ENCODE measurements at regions of chr22 and their contacts with region 1.

Region 1: DNA sequence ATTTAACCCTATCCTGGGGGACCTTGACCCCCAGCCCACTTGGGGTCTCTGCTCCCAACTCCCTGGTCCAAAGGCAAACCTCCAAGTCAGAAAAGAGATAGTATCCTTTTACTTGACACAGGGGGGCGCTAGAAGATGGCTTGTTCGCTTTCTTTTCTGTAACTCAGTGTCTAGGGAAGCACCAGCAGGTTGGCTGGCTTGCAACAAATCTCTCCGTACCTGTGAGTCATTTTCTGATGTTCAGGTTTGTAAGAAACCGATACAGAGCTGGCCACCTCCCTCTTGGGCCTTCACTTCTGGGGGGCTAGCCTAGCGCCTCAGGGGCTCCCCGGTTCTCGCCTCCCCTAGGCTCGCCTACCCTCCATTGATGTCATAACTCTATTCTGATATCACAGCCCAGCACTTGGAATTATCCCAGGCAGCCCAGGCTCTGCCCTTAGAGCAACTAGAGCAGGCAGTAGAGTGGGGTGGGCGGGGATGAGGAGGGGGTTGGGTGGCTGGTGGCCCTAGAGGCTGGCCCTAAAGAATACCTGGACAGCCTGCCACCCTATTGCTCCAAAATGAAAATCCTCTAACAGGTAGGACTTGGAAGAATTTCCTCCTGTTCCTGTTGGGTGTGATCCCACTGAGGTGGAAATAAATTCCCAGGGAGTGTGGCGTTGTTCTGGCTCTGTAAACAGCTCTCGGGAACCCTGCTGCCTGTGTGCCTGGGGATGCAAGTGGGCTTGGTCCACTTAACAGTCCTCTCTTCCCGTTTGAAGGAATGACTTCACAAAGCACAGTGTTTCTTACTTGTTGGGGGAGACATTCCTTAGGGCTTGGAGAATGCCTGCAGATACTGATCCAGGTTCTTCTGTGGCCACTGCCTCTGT is 69.4 kb downstream of the OSBP2 start:
- DNase-seq: peak; percentile 85
- ATAC-seq: peak; percentile 93
- H3K4me3 ChIP-seq: no peak overlapping the region
- H3K27ac ChIP-seq: peak overlapping the region; percentile 63
- H3K4me1 ChIP-seq: peaks cover 8% of the 10 kb centered on the region
- H3K27me3 ChIP-seq: no peaks in the 10 kb centered on the region
- CTCF ChIP-seq: peak; percentile 76

Region 2: GRCh38 chr22:30705710-30706651 is 58.1 kb before region 1 on chr22:
- CTCF ChIA-PET with region 1: no interaction called
- POLR2A ChIA-PET with region 1: no interaction called
- intact Hi-C with region 1: no loop called
- DNase-seq: peak; percentile 83
- ATAC-seq: peak; percentile 93
- H3K4me3 ChIP-seq: no peak overlapping the region
- H3K27ac ChIP-seq: peak overlapping the region; percentile 77
- H3K4me1 ChIP-seq: peaks cover 25% of the 10 kb centered on the region
- H3K27me3 ChIP-seq: no peaks in the 10 kb centered on the region
- CTCF ChIP-seq: no peak

Region 3: GRCh38 chr22:30802202-30803166 is 38.4 kb after region 1 on chr22:
- CTCF ChIA-PET with region 1: interaction called, 6 read pairs
- POLR2A ChIA-PET with region 1: no interaction called
- intact Hi-C with region 1: loop called (anchors 5 kb)
- DNase-seq: peak; percentile 91
- ATAC-seq: peak; percentile 80
- H3K4me3 ChIP-seq: peak overlapping the region; percentile 65
- H3K27ac ChIP-seq: peak overlapping the region; percentile 96
- H3K4me1 ChIP-seq: peaks cover 47% of the 10 kb centered on the region
- H3K27me3 ChIP-seq: no peaks in the 10 kb centered on the region
- CTCF ChIP-seq: no peak

Region 4: GRCh38 chr22:30920407-30920806 is 156.4 kb after region 1 on chr22:
- CTCF ChIA-PET with region 1: interaction called, 11 read pairs
- POLR2A ChIA-PET with region 1: no interaction called
- intact Hi-C with region 1: loop called (anchors 1 kb)
- DNase-seq: peak; percentile 70
- ATAC-seq: peak; percentile 70
- H3K4me3 ChIP-seq: no peak overlapping the region
- H3K27ac ChIP-seq: no peak overlapping the region
- H3K4me1 ChIP-seq: no peaks in the 10 kb centered on the region
- H3K27me3 ChIP-seq: no peaks in the 10 kb centered on the region
- CTCF ChIP-seq: peak; percentile 82

Region 5: GRCh38 chr22:31036671-31037550 is 272.9 kb after region 1 on chr22:
- CTCF ChIA-PET with region 1: no interaction called
- POLR2A ChIA-PET with region 1: no interaction called
- intact Hi-C with region 1: no loop called
- DNase-seq: peak; percentile 64
- ATAC-seq: peak; percentile 89
- H3K4me3 ChIP-seq: peak overlapping the region; percentile 62
- H3K27ac ChIP-seq: no peak overlapping the region
- H3K4me1 ChIP-seq: peaks cover 6% of the 10 kb centered on the region
- H3K27me3 ChIP-seq: no peaks in the 10 kb centered on the region
- CTCF ChIP-seq: peak; percentile 53

Measured in PC-3 (cell line).